Activated CD4-positive, alpha-beta memory T cell treated with anti-CD3 and anti-CD28 coated beads, Interleukin-2, amount 10 ng/mL, durations not matched to agents 7 days and 5 days (primary cell): ENCODE measurements at regions of chr14 and their contacts with region 1.

Region 1: GRCh38 chr14:95515596-95516552 is 576 bp downstream of the SYNE3 start:
- DNase-seq: peak; percentile 86
- H3K4me3 Mint-ChIP-seq: peak overlapping the region; percentile 92
- H3K27ac Mint-ChIP-seq: peak overlapping the region; percentile 87
- H3K4me1 Mint-ChIP-seq: peaks cover 77% of the 10 kb centered on the region
- H3K27me3 Mint-ChIP-seq: no peaks in the 10 kb centered on the region

Region 2: GRCh38 chr14:95282354-95283083 is 233.4 kb before region 1 on chr14:
- CTCF ChIA-PET with region 1: no interaction called
- POLR2A ChIA-PET with region 1: no interaction called
- DNase-seq: no peak
- H3K4me3 Mint-ChIP-seq: no peak overlapping the region
- H3K27ac Mint-ChIP-seq: no peak overlapping the region
- H3K4me1 Mint-ChIP-seq: no peaks in the 10 kb centered on the region
- H3K27me3 Mint-ChIP-seq: peaks cover 7% of the 10 kb centered on the region

Region 3: DNA sequence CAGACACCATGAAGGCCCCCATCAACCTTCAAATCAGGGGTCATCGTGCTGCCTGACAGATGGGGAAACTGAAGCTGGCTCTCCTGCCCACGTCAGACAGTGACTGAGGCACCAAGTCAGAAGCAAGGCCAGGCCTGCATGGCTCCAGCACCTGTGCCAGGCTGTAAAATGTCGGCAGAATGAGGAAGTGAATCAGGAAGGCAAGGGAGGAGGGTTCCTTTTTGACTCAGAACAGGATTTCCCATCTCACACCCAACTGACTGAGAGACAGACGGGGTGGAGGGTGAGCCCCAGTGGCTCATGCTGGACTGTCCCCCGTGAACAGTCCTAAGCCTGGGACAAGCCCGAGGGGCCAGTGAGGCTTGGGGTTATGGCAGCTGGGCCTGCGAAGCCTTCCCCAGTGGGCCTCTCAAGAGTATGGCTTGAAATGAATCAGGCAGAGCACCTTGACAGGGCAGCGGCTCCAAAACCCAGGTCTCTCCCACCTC is 20.3 kb before region 1 on chr14:
- CTCF ChIA-PET with region 1: interaction called, 3 read pairs
- POLR2A ChIA-PET with region 1: interaction called, 58 read pairs
- DNase-seq: peak; percentile 41
- H3K4me3 Mint-ChIP-seq: peak overlapping the region; percentile 36
- H3K27ac Mint-ChIP-seq: peak overlapping the region; percentile 88
- H3K4me1 Mint-ChIP-seq: peaks cover 77% of the 10 kb centered on the region
- H3K27me3 Mint-ChIP-seq: no peaks in the 10 kb centered on the region

Region 4: GRCh38 chr14:95500772-95501401 is 15.0 kb before region 1 on chr14:
- CTCF ChIA-PET with region 1: interaction called, 5 read pairs
- POLR2A ChIA-PET with region 1: interaction called, 58 read pairs
- DNase-seq: no peak
- H3K4me3 Mint-ChIP-seq: no peak overlapping the region
- H3K27ac Mint-ChIP-seq: peak overlapping the region; percentile 7
- H3K4me1 Mint-ChIP-seq: peaks cover 84% of the 10 kb centered on the region
- H3K27me3 Mint-ChIP-seq: no peaks in the 10 kb centered on the region